K562 (cell line): ENCODE measurements at regions of chr3 and their contacts with region 1.

Region 1: GRCh38 chr3:24494618-24495325 is at the start of gene THRB:
- DNase-seq: peak; percentile 77 to 85 (median 84)
- ATAC-seq: peak; percentile 73
- H3K4me3 ChIP-seq: peak within 1 kb of the TSS; percentile 64
- H3K27ac ChIP-seq: peak within 1 kb of the TSS; percentile 75
- H3K4me1 ChIP-seq: peaks cover 22 to 27% of the 10 kb centered on the region in 2 experiments; a peak in 4 of 5 replicates
- H3K27me3 ChIP-seq: no peaks in the 10 kb centered on the region
- CTCF ChIP-seq: peak in 2 of 3 experiments; percentile 31 to 54; a peak in 2 of 6 replicates
- EP300 ChIP-seq: no peak
- POLR2A ChIP-seq: peak; percentile 43
- RAD21 ChIP-seq: 0 out of 4 replicates have a peak, but pooled peaks of 1 of the 2 experiments have one; percentile 3
- polyA plus RNA-seq, gene THRB: 1.7 to 3.0 TPM

Region 2: GRCh38 chr3:23999012-23999641 is 495.6 kb before region 1 on chr3:
- CTCF ChIA-PET with region 1: no interaction called
- POLR2A ChIA-PET with region 1: no interaction called
- in situ Hi-C with region 1: no loop called
- intact Hi-C with region 1: loop called (anchors 10 kb)
- DNase-seq: peak; percentile 55 to 78 (median 58)
- ATAC-seq: peak; percentile 73
- H3K4me3 ChIP-seq: no peak overlapping the region
- H3K27ac ChIP-seq: no peak overlapping the region
- H3K4me1 ChIP-seq: no peaks in the 10 kb centered on the region
- H3K27me3 ChIP-seq: peaks cover 4 to 11% of the 10 kb centered on the region in 2 experiments; a peak in 3 of 5 replicates
- CTCF ChIP-seq: peak; percentile 90 to 98 (median 96)
- EP300 ChIP-seq: no peak
- POLR2A ChIP-seq: no peak
- RAD21 ChIP-seq: peak; percentile 99

Region 3: DNA sequence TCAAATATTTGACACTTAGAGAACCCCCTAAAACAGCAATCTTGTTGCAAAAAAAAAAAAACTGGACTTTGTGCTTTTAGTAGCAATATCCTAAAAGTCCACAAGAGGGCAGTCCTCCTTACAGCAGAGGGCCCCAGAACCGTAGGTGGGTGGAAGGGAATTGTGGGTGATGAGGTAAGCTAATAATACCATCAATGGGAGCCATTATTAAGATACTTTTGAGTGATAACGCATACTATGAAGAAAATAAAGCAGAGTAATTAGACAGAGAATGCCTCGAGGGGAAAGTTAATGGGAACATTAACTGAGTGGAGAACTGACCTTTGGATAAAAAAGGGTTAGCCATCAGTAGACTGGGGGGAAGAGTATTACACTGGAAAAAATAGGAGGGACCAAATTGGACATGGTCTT is 230.0 kb before region 1 on chr3:
- CTCF ChIA-PET with region 1: interaction called, 8 read pairs
- POLR2A ChIA-PET with region 1: interaction called, 3 read pairs
- in situ Hi-C with region 1: loop called (anchors 5 kb)
- intact Hi-C with region 1: loop called (anchors 1 kb)
- DNase-seq: peak; percentile 74 to 83 (median 78)
- ATAC-seq: peak; percentile 52
- H3K4me3 ChIP-seq: no peak overlapping the region
- H3K27ac ChIP-seq: no peak overlapping the region
- H3K4me1 ChIP-seq: peaks cover 9 to 24% of the 10 kb centered on the region in 2 experiments; a peak in 4 of 5 replicates
- H3K27me3 ChIP-seq: no peaks in the 10 kb centered on the region
- CTCF ChIP-seq: peak; percentile 71 to 87 (median 85)
- EP300 ChIP-seq: no peak
- POLR2A ChIP-seq: no peak
- RAD21 ChIP-seq: peak; percentile 73 to 82

Region 4: DNA sequence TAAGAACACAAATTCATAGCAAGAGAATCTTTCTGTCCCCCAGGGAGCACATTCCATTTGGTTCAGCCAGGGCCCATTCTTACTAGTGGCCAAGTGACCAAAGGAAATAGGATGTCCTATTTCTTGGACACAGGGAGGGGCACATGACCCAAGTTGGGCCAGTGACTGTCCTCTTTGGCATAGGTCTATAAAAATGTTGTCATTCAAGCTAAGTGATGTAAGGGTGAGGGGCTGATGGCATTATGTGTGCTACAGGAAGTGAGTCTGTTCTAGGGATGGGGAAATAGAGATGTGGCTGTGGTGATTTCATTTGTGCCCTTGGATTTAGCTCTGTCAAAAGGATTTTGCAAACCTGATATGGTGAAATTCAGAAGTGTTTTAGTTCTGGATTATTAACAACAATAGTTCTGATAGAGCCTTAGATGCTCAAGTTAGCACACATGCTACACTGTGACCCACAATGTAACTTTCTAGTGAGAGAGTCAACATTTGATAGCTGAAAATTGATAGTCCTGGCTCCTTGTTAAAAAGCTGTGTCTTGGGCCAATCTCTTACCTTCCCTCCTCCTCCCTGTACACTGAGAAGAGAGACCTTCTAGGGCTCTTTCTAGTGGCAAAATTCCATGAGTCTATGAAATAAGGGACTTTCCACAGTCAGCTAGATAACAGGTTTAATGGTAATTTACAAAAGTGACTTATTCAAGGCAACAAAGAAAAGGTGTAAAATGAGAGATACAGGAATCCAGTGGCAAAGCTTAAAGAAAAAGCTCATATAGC is 117.4 kb before region 1 on chr3:
- CTCF ChIA-PET with region 1: no interaction called
- POLR2A ChIA-PET with region 1: interaction called, 3 read pairs
- in situ Hi-C with region 1: no loop called
- intact Hi-C with region 1: loop called (anchors 5 kb)
- DNase-seq: no peak
- ATAC-seq: peak; percentile 27
- H3K4me3 ChIP-seq: no peak overlapping the region
- H3K27ac ChIP-seq: peak overlapping the region; percentile 67; the same call in 2 of the 3 replicates
- H3K4me1 ChIP-seq: peaks cover 3 to 49% of the 10 kb centered on the region in 2 experiments; a peak in 3 of 5 replicates
- H3K27me3 ChIP-seq: no peaks in the 10 kb centered on the region
- CTCF ChIP-seq: no peak
- EP300 ChIP-seq: no peak
- POLR2A ChIP-seq: no peak
- RAD21 ChIP-seq: no peak

Region 5: GRCh38 chr3:24521420-24522145 is 26.8 kb after region 1 on chr3:
- CTCF ChIA-PET with region 1: interaction called, 3 read pairs
- POLR2A ChIA-PET with region 1: interaction called, 11 read pairs
- in situ Hi-C with region 1: no loop called
- intact Hi-C with region 1: loop called (anchors 2 kb)
- DNase-seq: peak; percentile 56 to 69 (median 64)
- ATAC-seq: peak; percentile 88
- H3K4me3 ChIP-seq: peak overlapping the region; percentile 55
- H3K27ac ChIP-seq: peak overlapping the region; percentile 55
- H3K4me1 ChIP-seq: peaks cover 26 to 28% of the 10 kb centered on the region in 2 experiments
- H3K27me3 ChIP-seq: no peaks in the 10 kb centered on the region
- CTCF ChIP-seq: peak in 1 of 3 experiments; percentile 29; a peak in 2 of 6 replicates
- EP300 ChIP-seq: no peak
- POLR2A ChIP-seq: peak; percentile 71
- RAD21 ChIP-seq: peak; percentile 31 to 33; a peak in 2 of 4 replicates

Region 6: GRCh38 chr3:24598695-24599470 is 104.1 kb after region 1 on chr3:
- CTCF ChIA-PET with region 1: no interaction called
- POLR2A ChIA-PET with region 1: no interaction called
- in situ Hi-C with region 1: no loop called
- intact Hi-C with region 1: no loop called
- DNase-seq: no peak
- ATAC-seq: no peak
- H3K4me3 ChIP-seq: no peak overlapping the region
- H3K27ac ChIP-seq: no peak overlapping the region
- H3K4me1 ChIP-seq: no peaks in the 10 kb centered on the region
- H3K27me3 ChIP-seq: no peaks in the 10 kb centered on the region
- CTCF ChIP-seq: no peak
- EP300 ChIP-seq: no peak
- POLR2A ChIP-seq: no peak
- RAD21 ChIP-seq: no peak

Region 7: DNA sequence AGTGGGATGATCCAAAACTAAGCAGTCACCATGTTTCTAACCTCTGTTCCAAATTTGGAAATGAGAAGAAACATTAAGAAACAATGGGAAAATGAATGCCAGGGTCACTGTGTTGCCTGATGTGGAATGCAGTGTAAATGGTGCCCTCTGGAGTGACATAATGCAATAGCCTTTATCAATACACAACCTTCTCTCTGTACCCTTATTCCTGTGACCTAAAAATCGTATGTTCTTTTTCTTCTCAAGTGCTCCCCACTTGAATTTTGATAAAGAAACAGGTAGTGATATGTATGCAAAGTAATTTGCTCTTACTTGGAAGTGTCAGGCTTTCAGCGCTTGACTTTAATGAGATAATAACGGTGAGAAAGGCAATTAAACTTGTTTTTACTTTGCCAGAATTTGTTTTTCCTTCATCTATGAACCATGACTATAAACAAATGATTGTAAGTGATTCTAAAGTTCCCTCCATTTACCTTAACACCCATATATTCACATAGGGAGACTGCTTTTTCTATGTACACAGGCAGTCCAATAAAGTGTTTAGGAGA is 145.6 kb after region 1 on chr3:
- CTCF ChIA-PET with region 1: no interaction called
- POLR2A ChIA-PET with region 1: no interaction called
- in situ Hi-C with region 1: no loop called
- intact Hi-C with region 1: loop called (anchors 2 kb)
- DNase-seq: peak in 2 of 4 experiments; percentile 35 to 52
- ATAC-seq: peak; percentile 90
- H3K4me3 ChIP-seq: no peak overlapping the region
- H3K27ac ChIP-seq: no peak overlapping the region
- H3K4me1 ChIP-seq: peaks cover 0 to 4% of the 10 kb centered on the region in 2 experiments; a peak in 1 of 5 replicates
- H3K27me3 ChIP-seq: 0 out of 5 replicates have a peak, but pooled peaks cover 0 to 7% of the 10 kb centered on the region in 2 experiments
- CTCF ChIP-seq: peak; percentile 57 to 78 (median 59)
- EP300 ChIP-seq: no peak
- POLR2A ChIP-seq: no peak
- RAD21 ChIP-seq: peak; percentile 75 to 90